Right lobe of liver (tissue), 6 donors: ENCODE measurements at regions of chr12 and their contacts with region 1.

Region 1: DNA sequence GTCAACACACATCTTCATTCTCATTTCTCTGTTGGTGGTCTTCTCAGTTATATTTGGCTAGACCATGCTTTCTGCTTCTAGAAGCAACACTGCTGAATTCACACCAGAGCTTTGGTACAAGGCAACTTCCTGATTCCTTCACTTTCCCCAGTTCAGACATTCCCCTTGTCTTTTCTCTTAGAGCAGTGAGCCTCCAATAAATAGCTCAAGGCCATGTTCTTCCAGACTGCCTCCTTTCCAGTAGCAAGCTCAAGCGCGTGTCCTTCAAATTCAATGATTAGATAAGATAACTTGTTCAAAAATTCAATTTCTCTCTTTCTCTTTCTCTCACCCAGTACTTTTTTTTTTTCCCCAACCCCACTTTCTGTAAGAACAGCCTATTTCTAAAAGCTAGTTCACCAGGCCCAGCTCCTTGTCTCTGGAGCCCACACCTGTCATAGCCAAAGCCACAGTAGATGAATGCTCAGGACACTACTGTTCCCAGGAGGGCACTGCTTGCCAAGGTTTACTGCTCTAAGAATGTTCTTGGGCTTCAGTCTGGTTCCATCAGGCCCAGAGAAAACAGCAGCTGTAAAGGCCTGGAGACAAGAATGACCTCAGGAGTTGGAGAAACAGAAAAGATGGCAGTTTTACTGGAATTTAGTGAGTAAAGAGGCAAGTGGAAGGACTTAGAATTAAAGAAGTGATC is 17.7 kb downstream of the TBK1 start:
- DNase-seq: no peak
- ATAC-seq: no peak
- H3K4me3 ChIP-seq: no peak overlapping the region
- H3K27ac ChIP-seq: no peak overlapping the region
- H3K4me1 ChIP-seq: no peaks in the 10 kb centered on the region
- H3K27me3 ChIP-seq: no peaks in the 10 kb centered on the region
- CTCF ChIP-seq: no peak
- POLR2A ChIP-seq: no peak

Region 2: DNA sequence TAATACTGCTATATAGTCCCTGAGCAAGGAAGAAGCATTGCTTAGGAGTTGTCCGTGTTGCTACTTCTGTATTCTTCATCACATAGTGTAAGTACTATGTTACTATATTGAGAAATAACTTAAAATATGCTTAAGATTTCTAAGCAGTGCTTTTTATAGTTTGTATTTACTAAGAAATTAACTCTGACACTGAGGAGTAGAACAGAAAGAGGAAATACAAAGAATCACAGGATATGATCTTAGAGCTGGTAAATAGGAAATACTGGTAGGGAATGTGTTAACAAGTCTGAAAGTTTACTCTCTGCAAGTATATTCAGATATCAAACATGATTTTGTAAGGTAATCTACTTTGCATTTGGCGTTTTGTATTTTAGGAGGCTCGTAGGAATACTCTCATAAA is 49.9 kb before region 1 on chr12:
- intact Hi-C with region 1: loop called in 1 of 2 experiments (anchors 10 kb)
- DNase-seq: no peak
- ATAC-seq: no peak
- H3K4me3 ChIP-seq: no peak overlapping the region
- H3K27ac ChIP-seq: no peak overlapping the region
- H3K4me1 ChIP-seq: no peaks in the 10 kb centered on the region
- H3K27me3 ChIP-seq: no peaks in the 10 kb centered on the region
- CTCF ChIP-seq: no peak
- POLR2A ChIP-seq: no peak